ENCODE measurements at regions of chr5 and their contacts with region 1.

Region 1: GRCh38 chr5:175464074-175464941 is 14.1 kb upstream of the SFXN1 start:
- DNase-seq: peak; percentile 70
- H3K27ac ChIP-seq: no peak overlapping the region
- CTCF ChIP-seq: peak; percentile 83

Region 2: DNA sequence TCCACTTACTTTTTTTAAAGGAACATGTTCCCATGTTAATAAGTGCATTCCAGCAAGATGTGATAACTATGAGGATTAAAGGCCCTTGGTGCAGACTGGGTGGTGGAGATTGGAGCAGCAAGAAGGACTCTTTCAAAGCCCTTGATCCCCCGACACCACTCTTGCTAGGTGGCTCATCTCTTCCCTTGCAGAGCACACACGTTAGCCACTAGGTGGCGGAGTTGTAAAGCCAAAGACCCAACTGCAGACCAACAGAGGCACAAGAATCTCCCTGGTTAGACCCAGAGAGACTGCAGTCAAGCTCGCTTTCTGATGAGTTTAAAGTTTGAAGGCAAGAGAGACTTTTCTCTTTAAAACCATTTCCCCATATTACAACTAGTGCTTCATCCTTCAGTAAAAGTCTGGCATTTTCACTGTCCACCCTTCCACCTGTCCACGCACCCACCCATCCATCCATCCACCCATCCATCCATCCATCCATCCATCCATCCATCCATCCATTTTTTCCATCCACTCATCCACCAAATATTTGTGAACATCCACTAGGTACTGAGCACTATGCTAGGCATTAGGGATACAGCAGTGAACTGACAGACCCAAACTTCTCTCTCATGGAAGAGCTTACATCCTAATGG is 513.0 kb before region 1 on chr5:
- CTCF ChIA-PET with region 1: interaction called, 10 read pairs
- POLR2A ChIA-PET with region 1: no interaction called
- DNase-seq: peak; percentile 84
- H3K27ac ChIP-seq: no peak overlapping the region
- CTCF ChIP-seq: peak; percentile 89

Region 3: GRCh38 chr5:175444060-175444904 is 20.0 kb before region 1 on chr5 and contains the start of gene DRD1:
- CTCF ChIA-PET with region 1: interaction called, 10 read pairs
- POLR2A ChIA-PET with region 1: no interaction called
- DNase-seq: peak; percentile 61
- H3K27ac ChIP-seq: no peak within 1 kb of the TSS
- CTCF ChIP-seq: peak; percentile 84

Region 4: DNA sequence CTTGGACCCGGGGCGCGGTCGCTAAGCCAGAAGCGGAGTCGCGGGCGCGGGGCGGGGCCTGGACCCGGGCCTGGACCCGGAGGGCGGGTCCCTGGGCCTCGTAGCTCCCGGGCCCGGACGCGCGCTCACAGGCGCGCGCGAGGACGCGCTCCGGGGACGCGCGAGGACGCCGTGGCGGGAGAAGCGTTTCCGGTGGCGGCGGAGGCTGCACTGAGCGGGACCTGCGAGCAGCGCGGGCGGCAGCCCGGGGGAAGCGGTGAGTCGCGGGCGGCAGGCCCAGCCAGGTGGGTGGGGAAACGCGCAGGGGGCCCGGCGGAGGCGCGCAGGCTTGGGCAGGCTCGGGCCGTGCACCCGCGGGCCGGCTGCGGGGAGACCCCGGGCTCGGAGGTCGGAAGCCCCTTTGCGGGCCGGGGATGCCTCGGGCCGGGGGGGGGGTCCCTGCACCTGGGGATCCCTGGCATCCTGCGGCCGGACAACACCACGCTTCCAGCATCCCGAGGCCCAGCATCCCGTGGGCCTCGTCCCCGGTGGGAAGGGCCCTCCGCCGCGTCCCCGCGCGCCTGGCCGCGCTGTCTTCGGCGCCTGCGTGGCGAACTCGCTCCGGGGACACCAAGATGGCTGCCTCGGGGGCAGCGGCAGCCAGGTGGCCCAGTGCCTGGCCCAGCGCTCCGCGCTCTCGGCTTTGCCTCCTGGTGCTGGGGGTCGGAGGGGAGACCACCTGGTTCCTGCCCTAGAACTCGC is 14.2 kb after region 1 on chr5 and contains the start of gene SFXN1:
- CTCF ChIA-PET with region 1: interaction called, 11 read pairs
- POLR2A ChIA-PET with region 1: interaction called, 4 read pairs
- DNase-seq: peak; percentile 94
- H3K27ac ChIP-seq: peak within 1 kb of the TSS; percentile 83
- CTCF ChIP-seq: no peak